ENCODE measurements at regions of chr4 and their contacts with region 1.

Region 1: DNA sequence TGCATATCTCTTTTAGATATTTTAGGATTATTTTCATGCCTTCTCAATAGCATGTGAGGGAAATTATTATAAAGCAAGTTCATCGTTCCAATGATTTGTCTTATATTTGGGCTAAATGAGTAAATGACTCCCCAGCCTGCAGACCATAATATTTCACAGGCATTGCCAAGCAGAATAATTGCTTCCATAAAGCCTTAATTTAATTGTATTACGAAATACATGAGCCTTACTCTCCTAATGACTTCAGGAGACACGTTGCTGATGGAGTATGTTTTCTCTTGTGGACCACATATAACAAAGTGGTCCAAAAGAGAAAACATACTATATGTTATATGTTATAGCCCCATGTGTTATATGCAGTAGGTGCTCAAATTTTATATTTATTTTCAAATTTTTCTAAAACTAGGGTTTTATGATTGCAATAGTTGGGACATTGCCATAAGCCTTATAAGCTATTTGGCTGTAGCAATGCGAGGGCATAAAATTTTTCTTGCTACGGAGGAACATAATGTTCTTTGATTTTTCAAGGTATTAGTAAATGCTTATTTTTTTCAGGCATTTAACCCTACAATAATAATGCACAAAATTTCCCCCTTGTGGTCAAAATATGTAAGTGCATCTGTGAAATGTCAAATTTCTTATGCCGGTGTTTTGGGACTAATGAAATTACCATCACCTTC is 26.2 kb upstream of the TMPRSS11D start:
- DNase-seq: no peak
- H3K4me3 ChIP-seq: no peak overlapping the region
- H3K27ac ChIP-seq: no peak overlapping the region
- H3K4me1 ChIP-seq: no peaks in the 10 kb centered on the region
- H3K27me3 ChIP-seq: no peaks in the 10 kb centered on the region
- CTCF ChIP-seq: peak; percentile 29 to 67 (median 50)
- EP300 ChIP-seq: no peak
- POLR2A ChIP-seq: no peak

Region 2: GRCh38 chr4:67558493-67558892 is 351.6 kb before region 1 on chr4 and contains the start of gene STAP1:
- in situ Hi-C with region 1: loop called in 1 of 4 experiments (anchors 25 kb)
- intact Hi-C with region 1: no loop called
- DNase-seq: peak; percentile 15
- H3K4me3 ChIP-seq: peak within 1 kb of the TSS in 1 of 4 donors; percentile 30
- H3K27ac ChIP-seq: no peak within 1 kb of the TSS
- H3K4me1 ChIP-seq: no peaks in the 10 kb centered on the region
- H3K27me3 ChIP-seq: no peaks in the 10 kb centered on the region
- CTCF ChIP-seq: no peak
- EP300 ChIP-seq: no peak
- POLR2A ChIP-seq: peak; percentile 48
- total RNA-seq, gene STAP1: 0.55 to 6.2 (median 4.9) TPM in 3 of 4 donors, not detected in the other

Region 3: DNA sequence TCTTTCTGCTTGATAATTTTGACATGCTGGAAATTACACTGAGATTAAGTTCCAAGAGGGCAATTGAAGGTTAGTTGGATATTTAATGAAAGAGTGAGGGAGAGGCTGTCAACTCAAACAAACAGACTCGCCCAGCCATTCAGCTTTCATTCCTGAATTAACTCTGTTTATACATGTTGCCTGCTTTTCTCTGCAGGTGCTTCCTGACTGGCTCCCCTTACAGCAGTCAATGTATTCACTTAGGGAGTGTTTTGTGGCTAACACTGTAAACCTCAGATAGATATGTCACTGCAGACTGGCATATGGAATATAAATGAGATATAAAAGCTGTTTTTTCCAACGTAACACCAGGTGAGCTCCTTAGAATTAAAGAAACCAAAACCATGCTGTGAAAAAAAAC is 24.6 kb after region 1 on chr4:
- in situ Hi-C with region 1: no loop called
- intact Hi-C with region 1: no loop called
- DNase-seq: no peak
- H3K4me3 ChIP-seq: no peak overlapping the region
- H3K27ac ChIP-seq: no peak overlapping the region
- H3K4me1 ChIP-seq: no peaks in the 10 kb centered on the region
- H3K27me3 ChIP-seq: no peaks in the 10 kb centered on the region
- CTCF ChIP-seq: no peak
- EP300 ChIP-seq: no peak
- POLR2A ChIP-seq: no peak

Measured in transverse colon (tissue), 4 donors.